A673 (cell line): ENCODE measurements at regions of chr4 and their contacts with region 1.

Region 1: GRCh38 chr4:20544645-20545044 is 155.6 kb upstream of the PACRGL start:
- DNase-seq: peak; percentile 66
- H3K4me3 ChIP-seq: no peak overlapping the region
- H3K27ac ChIP-seq: no peak overlapping the region
- H3K4me1 ChIP-seq: peaks cover 5% of the 10 kb centered on the region
- H3K27me3 ChIP-seq: no peaks in the 10 kb centered on the region
- CTCF ChIP-seq: peak; percentile 69

Region 2: GRCh38 chr4:18689308-18690115 is 1855.1 kb before region 1 on chr4:
- CTCF ChIA-PET with region 1: no interaction called
- POLR2A ChIA-PET with region 1: no interaction called
- intact Hi-C with region 1: loop called (anchors 10 kb)
- DNase-seq: peak; percentile 69
- H3K4me3 ChIP-seq: no peak overlapping the region
- H3K27ac ChIP-seq: no peak overlapping the region
- H3K4me1 ChIP-seq: no peaks in the 10 kb centered on the region
- H3K27me3 ChIP-seq: no peaks in the 10 kb centered on the region
- CTCF ChIP-seq: peak; percentile 86

Region 3: DNA sequence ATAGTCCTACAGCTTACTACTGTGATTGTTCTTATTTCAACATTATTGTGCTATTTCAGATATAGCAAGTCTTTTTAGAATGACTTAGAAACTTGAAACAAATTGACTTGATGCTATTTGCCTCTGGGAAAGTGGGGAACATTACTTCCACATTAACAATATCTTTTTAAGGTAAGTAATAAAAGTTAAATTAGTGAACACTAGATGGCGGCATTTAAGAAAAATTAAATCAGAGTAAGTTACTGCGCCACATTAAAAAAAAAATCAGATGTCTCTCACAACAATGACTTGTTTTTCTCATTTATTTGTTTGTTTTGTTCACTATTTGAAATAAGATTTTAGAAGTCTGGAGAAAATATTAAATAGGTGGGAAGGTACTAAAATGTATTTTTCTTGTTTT is 1319.8 kb before region 1 on chr4:
- CTCF ChIA-PET with region 1: no interaction called
- POLR2A ChIA-PET with region 1: no interaction called
- intact Hi-C with region 1: loop called (anchors 10 kb)
- DNase-seq: peak; percentile 62
- H3K4me3 ChIP-seq: no peak overlapping the region
- H3K27ac ChIP-seq: no peak overlapping the region
- H3K4me1 ChIP-seq: no peaks in the 10 kb centered on the region
- H3K27me3 ChIP-seq: no peaks in the 10 kb centered on the region
- CTCF ChIP-seq: peak; percentile 56

Region 4: DNA sequence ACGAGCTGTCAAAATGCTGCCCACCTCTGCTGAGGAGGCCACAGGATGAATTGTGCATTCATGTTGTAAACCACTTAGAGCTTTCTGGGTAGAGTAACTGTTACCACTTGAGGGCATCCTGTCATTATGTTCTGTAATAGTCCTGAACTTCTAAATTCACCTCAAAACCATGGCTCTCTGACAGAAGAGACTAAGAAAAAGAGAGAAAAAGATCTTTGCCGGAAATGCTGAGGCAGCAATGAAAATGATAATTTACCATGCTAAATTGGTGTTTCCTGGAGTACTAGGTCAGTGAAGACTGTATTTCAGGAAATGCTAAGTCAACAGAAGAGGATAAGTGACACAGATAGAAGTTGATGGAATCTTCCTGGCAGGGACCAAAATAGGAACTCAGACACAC is 1235.3 kb before region 1 on chr4:
- CTCF ChIA-PET with region 1: no interaction called
- POLR2A ChIA-PET with region 1: no interaction called
- intact Hi-C with region 1: loop called (anchors 10 kb)
- DNase-seq: peak; percentile 96
- H3K4me3 ChIP-seq: no peak overlapping the region
- H3K27ac ChIP-seq: no peak overlapping the region
- H3K4me1 ChIP-seq: peaks cover 32% of the 10 kb centered on the region
- H3K27me3 ChIP-seq: no peaks in the 10 kb centered on the region
- CTCF ChIP-seq: peak; percentile 60

Region 5: DNA sequence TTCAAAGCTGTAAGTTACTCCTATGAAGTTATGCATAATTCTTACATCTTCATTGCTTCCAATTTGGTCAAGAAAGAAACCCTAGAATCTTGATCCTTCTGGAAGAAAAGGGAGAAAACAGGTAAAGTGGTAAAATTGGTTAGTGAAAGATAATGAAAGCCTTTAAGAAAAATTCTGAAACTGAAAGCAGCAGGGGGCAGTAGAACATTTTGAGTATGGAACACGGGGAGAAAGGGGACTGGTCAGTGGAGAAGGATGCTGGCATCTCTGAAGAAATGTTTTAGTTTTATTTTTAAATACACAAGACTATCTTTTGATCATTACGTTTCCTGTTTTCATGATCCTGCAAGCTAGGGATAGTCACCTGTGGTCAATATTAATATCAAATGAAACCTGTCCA is 238.7 kb before region 1 on chr4:
- CTCF ChIA-PET with region 1: no interaction called
- POLR2A ChIA-PET with region 1: no interaction called
- intact Hi-C with region 1: loop called (anchors 5 kb)
- DNase-seq: peak; percentile 74
- H3K4me3 ChIP-seq: no peak overlapping the region
- H3K27ac ChIP-seq: peak overlapping the region; percentile 63
- H3K4me1 ChIP-seq: peaks cover 26% of the 10 kb centered on the region
- H3K27me3 ChIP-seq: no peaks in the 10 kb centered on the region
- CTCF ChIP-seq: peak; percentile 57

Region 6: DNA sequence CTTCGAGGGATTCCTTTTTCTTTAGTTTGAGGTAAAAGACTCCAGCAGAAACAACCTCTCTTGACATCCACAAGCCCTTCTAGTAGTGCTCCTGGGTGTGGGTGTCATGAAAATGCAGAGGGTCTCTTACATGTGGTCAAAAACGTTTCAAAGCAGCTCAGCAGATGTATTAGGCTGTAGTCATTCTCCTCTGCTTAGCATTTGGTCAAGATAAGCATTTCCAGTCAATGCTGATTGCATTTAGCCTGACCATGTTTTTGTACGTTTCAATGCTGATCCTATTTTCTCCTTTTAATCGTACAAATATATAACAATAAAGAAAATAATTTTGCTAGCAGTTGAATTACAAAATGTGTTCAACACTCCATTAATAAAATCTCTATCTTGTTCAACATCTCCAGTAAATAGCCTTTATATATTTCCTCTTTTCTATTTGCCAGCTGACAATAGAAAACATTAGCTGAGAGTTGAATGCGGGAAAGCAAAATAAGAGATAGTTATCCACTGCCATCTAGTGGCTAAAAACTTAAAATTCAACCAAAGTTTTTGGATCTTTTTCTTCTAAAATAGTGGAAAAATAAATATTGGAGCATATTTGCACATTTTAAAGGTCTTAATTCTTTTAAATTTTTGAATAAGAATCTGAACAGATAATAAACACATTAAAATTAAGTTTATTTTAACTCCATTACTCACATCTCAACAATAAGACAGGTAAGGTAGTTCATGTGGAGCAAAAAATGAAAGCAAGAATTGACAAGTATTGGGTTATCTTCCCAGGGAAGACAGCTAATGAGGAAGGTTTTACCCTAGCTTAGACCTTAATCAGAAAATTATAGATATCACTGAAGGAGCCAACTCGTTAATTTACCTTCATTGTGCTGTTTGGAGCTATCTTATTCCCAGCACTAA is 140.5 kb after region 1 on chr4:
- CTCF ChIA-PET with region 1: interaction called, 4 read pairs
- POLR2A ChIA-PET with region 1: no interaction called
- intact Hi-C with region 1: loop called (anchors 5 kb)
- DNase-seq: peak; percentile 57
- H3K4me3 ChIP-seq: no peak overlapping the region
- H3K27ac ChIP-seq: no peak overlapping the region
- H3K4me1 ChIP-seq: no peaks in the 10 kb centered on the region
- H3K27me3 ChIP-seq: no peaks in the 10 kb centered on the region
- CTCF ChIP-seq: peak; percentile 71

Region 7: GRCh38 chr4:21032089-21032645 is 487.5 kb after region 1 on chr4:
- CTCF ChIA-PET with region 1: no interaction called
- POLR2A ChIA-PET with region 1: no interaction called
- intact Hi-C with region 1: no loop called
- DNase-seq: no peak
- H3K4me3 ChIP-seq: no peak overlapping the region
- H3K27ac ChIP-seq: no peak overlapping the region
- H3K4me1 ChIP-seq: no peaks in the 10 kb centered on the region
- H3K27me3 ChIP-seq: no peaks in the 10 kb centered on the region
- CTCF ChIP-seq: no peak